Caco-2 (cell line): ENCODE measurements at regions of chr6 and their contacts with region 1.

Region 1: DNA sequence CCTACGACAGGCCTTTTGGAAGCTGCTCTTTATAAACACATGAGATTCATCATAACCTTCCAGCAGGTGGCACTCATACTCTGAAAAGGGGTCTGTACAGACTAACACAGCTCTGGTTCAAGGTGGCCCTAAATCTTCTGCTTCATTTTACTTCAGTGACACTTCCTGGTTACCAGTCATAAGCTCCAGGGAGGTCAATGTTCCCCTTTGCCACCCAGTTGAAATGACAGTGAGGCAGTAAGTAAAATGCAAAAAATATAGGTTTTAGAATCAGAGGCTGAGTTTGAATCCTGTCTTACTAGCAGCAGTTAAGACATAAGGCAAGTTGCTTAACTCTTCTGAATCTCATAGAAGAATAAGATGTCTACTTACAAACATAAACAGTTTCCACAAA is 132.8 kb downstream of the CDK19 start:
- DNase-seq: peak; percentile 71 to 77
- H3K4me3 ChIP-seq: no peak overlapping the region
- H3K4me3 Mint-ChIP-seq: no peak overlapping the region
- H3K27ac Mint-ChIP-seq: peak overlapping the region; percentile 72
- H3K4me1 ChIP-seq: peaks cover 14% of the 10 kb centered on the region
- H3K4me1 Mint-ChIP-seq: peaks cover 12% of the 10 kb centered on the region
- H3K27me3 ChIP-seq: no peaks in the 10 kb centered on the region
- H3K27me3 Mint-ChIP-seq: no peaks in the 10 kb centered on the region
- CTCF ChIP-seq: peak; percentile 68 to 69

Region 2: DNA sequence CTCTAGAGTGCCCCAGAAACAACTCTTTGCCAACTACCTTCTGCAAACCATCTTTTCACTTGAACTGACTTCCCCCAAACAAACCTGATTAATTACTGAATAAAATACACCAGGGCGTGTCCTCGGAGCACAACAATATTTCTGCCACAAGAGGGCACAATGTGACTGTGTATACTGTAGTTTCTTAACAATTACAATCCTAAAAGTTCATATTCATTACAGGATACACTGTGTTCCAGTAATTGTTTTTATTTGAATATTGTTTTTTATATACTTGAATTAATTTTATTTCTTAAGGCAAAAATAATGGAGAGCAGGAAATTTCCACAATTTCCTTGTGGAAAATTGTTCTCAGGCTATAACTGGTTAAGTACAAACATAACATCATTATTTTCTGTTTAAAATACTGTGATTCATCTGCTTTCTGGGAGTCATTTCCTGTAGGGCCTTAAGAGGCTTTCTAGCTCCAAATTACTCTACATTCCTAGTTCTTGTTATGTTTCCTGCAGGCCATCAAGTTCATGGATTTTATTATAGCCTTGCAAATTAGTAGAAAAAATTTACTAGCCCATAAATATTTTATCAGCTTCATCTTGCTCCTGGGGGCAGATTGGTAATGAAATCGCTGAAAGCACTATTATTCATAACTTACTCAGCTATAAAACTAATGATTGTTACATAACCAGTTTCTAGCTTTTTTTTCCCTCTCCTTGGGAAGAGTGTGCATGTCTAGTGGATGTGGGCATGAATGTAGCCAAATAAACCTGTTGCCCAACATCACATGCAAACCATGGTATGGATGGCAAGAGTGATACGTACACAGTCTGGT is 154.1 kb before region 1 on chr6:
- CTCF ChIA-PET with region 1: no interaction called
- POLR2A ChIA-PET with region 1: no interaction called
- intact Hi-C with region 1: loop called (anchors 2 kb)
- DNase-seq: peak in 1 of 2 experiments; percentile 58
- H3K4me3 ChIP-seq: no peak overlapping the region
- H3K4me3 Mint-ChIP-seq: no peak overlapping the region
- H3K27ac Mint-ChIP-seq: no peak overlapping the region
- H3K4me1 ChIP-seq: peaks cover 3% of the 10 kb centered on the region; the same call in 1 of the 2 replicates
- H3K4me1 Mint-ChIP-seq: no peaks in the 10 kb centered on the region
- H3K27me3 ChIP-seq: no peaks in the 10 kb centered on the region
- H3K27me3 Mint-ChIP-seq: no peaks in the 10 kb centered on the region
- CTCF ChIP-seq: peak; percentile 68 to 79

Region 3: DNA sequence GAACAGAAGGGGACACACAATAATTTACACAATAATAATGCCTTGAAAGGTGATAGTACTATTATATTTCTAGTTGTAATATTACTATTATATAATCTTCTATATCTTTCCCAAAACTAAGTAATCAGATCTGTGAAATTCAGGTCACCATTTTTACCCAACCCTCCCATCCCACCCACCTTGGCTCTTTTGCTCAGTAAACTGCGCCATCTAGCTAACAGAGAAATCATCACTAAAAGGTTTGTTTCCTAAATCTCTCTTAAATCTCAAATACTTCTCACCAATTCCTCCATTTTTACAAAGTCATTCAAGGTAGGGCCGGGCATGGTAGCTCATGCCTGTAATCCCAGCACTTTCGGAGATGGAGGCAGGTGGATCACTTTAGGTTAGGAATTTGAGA is 49.4 kb after region 1 on chr6:
- CTCF ChIA-PET with region 1: no interaction called
- POLR2A ChIA-PET with region 1: no interaction called
- intact Hi-C with region 1: loop called (anchors 1 kb)
- DNase-seq: no peak
- H3K4me3 ChIP-seq: no peak overlapping the region
- H3K4me3 Mint-ChIP-seq: no peak overlapping the region
- H3K27ac Mint-ChIP-seq: no peak overlapping the region
- H3K4me1 ChIP-seq: no peaks in the 10 kb centered on the region
- H3K4me1 Mint-ChIP-seq: peaks cover 12% of the 10 kb centered on the region
- H3K27me3 ChIP-seq: no peaks in the 10 kb centered on the region
- H3K27me3 Mint-ChIP-seq: no peaks in the 10 kb centered on the region
- CTCF ChIP-seq: no peak

Region 4: GRCh38 chr6:110890288-110890687 is 207.8 kb after region 1 on chr6:
- CTCF ChIA-PET with region 1: no interaction called
- POLR2A ChIA-PET with region 1: no interaction called
- intact Hi-C with region 1: loop called (anchors 5 kb)
- DNase-seq: no peak
- H3K4me3 ChIP-seq: no peak overlapping the region
- H3K4me3 Mint-ChIP-seq: no peak overlapping the region
- H3K27ac Mint-ChIP-seq: no peak overlapping the region
- H3K4me1 ChIP-seq: peaks cover 14% of the 10 kb centered on the region
- H3K4me1 Mint-ChIP-seq: peaks cover 7% of the 10 kb centered on the region
- H3K27me3 ChIP-seq: no peaks in the 10 kb centered on the region
- H3K27me3 Mint-ChIP-seq: no peaks in the 10 kb centered on the region
- CTCF ChIP-seq: no peak

Region 5: DNA sequence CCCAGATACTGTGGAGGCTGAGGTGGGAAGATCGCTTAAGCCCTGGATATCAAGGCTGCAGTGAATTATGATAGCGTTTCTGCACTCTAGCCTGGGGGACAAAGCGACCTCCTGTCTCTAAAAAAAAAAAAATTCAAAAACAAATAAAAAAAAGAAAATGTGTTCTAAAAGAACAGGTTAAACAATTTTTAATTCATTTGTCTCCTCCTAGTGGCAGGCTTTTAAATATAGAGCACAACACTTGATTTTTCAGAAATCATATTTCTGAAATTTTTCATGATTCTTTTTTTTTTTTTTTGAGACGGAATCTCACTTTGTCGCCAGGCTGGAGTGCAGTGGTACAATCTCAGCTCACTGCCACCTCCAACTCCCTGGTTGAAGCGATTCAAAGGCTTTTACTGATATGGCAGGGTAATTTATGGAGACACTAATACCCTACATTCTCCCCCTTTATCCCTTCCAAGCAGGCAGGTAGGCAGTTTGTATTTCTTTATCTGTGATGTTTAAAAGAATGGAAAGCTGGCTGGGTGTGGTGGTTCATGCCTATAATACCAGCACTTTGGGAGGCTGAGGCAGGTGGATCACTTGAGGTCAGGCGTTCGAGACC is 267.3 kb after region 1 on chr6:
- CTCF ChIA-PET with region 1: interaction called, 3 read pairs
- POLR2A ChIA-PET with region 1: no interaction called
- intact Hi-C with region 1: loop called (anchors 1 kb)
- DNase-seq: no peak
- H3K4me3 ChIP-seq: no peak overlapping the region
- H3K4me3 Mint-ChIP-seq: no peak overlapping the region
- H3K27ac Mint-ChIP-seq: no peak overlapping the region
- H3K4me1 ChIP-seq: peaks cover 29% of the 10 kb centered on the region
- H3K4me1 Mint-ChIP-seq: peaks cover 31% of the 10 kb centered on the region
- H3K27me3 ChIP-seq: no peaks in the 10 kb centered on the region
- H3K27me3 Mint-ChIP-seq: no peaks in the 10 kb centered on the region
- CTCF ChIP-seq: peak; percentile 37 to 43

Region 6: DNA sequence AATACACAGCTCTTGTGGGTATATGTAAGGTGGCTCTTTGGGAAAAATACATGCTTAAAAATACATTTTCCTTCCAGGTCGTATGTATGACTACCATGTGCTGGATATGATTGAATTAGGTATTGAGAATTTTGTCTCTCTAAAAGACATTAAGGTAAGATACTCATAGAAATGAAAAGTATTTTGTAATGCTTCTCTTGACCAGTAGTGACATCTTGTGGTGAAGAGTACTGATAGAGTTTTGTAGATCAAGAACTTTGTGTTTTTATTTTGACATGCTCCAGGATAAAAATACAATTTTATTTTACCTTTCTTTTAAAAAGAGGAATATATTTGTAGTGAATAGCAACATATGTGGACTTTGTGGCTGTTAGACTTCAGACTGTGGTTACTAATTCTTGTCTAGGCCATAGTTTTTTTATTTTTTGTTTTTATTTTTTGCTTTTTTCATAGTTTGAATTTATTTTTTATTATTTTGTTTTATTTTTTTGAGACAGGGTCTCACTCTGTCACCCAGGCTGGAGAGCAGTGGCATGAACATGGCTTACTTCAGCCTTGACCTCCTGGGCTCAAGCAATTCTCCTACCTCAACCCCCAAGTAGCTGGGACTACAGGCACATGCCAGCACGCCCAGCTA is 317.3 kb after region 1 on chr6:
- CTCF ChIA-PET with region 1: no interaction called
- POLR2A ChIA-PET with region 1: no interaction called
- intact Hi-C with region 1: loop called (anchors 1 kb)
- DNase-seq: no peak
- H3K4me3 ChIP-seq: no peak overlapping the region
- H3K4me3 Mint-ChIP-seq: no peak overlapping the region
- H3K27ac Mint-ChIP-seq: no peak overlapping the region
- H3K4me1 ChIP-seq: no peaks in the 10 kb centered on the region
- H3K4me1 Mint-ChIP-seq: no peaks in the 10 kb centered on the region
- H3K27me3 ChIP-seq: no peaks in the 10 kb centered on the region
- H3K27me3 Mint-ChIP-seq: no peaks in the 10 kb centered on the region
- CTCF ChIP-seq: peak; percentile 24 to 31